K562 (cell line): ENCODE measurements at regions of chr4 and their contacts with region 1.

Region 1: GRCh38 chr4:48681856-48682255 is 98.2 kb downstream of the FRYL start:
- DNase-seq: peak in 1 of 4 experiments; percentile 59
- ATAC-seq: peak; percentile 58
- H3K4me3 ChIP-seq: no peak overlapping the region
- H3K27ac ChIP-seq: peak overlapping the region; percentile 70; the same call in 2 of the 3 replicates
- H3K4me1 ChIP-seq: peaks cover 2 to 29% of the 10 kb centered on the region in 2 experiments; a peak in 4 of 5 replicates
- H3K27me3 ChIP-seq: no peaks in the 10 kb centered on the region
- CTCF ChIP-seq: peak; percentile 17 to 64 (median 20); a peak in 3 of 6 replicates
- EP300 ChIP-seq: no peak
- POLR2A ChIP-seq: no peak
- RAD21 ChIP-seq: peak; percentile 43 to 74; a peak in 3 of 4 replicates

Region 2: DNA sequence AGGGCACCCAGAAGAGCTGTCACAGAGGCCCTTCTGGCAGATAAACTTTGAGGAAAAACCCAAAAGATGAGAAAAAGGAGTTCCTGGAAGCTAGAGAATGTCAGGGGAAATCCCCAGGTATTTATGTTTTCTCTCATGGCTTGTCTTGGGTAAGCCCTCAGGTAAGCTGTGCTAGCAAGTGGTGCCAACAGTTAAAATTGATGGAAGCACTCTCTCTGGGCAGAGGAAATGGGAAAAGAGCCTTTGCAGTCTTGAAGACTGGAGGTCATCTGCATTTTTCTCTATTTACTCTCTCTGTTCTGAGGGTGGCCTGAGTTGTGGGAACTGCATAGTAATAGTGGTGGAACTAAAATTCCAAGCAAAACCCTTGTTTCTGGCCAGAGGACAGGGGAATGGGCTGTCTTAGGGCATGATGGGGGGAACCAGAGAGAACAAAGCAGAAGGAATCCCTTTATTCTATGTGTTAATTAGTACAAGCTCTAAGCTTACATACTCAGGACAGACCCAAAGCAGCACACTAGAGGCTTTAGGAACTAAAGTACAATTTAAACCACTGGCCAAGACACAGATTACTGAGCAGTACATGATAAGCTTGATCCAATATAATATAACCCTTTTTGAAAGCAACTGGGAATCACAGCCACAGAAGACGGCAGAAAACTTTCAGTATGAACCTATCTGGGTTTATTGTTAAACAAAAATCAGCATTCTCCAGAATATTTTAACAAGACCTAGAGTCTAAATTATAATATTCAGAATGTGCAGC is 252.0 kb before region 1 on chr4:
- CTCF ChIA-PET with region 1: no interaction called
- POLR2A ChIA-PET with region 1: no interaction called
- in situ Hi-C with region 1: no loop called
- intact Hi-C with region 1: no loop called
- DNase-seq: no peak
- ATAC-seq: peak; percentile 20; the same call in 2 of the 3 replicates
- H3K4me3 ChIP-seq: no peak overlapping the region
- H3K27ac ChIP-seq: no peak overlapping the region
- H3K4me1 ChIP-seq: no peaks in the 10 kb centered on the region
- H3K27me3 ChIP-seq: no peaks in the 10 kb centered on the region
- CTCF ChIP-seq: no peak
- EP300 ChIP-seq: no peak
- POLR2A ChIP-seq: no peak
- RAD21 ChIP-seq: no peak

Region 3: GRCh38 chr4:48578132-48578968 is 103.5 kb before region 1 on chr4:
- CTCF ChIA-PET with region 1: interaction called, 6 read pairs
- POLR2A ChIA-PET with region 1: no interaction called
- in situ Hi-C with region 1: no loop called
- intact Hi-C with region 1: loop called (anchors 1 kb)
- DNase-seq: peak; percentile 45 to 77 (median 58)
- ATAC-seq: peak; percentile 94
- H3K4me3 ChIP-seq: no peak overlapping the region
- H3K27ac ChIP-seq: no peak overlapping the region
- H3K4me1 ChIP-seq: no peaks in the 10 kb centered on the region
- H3K27me3 ChIP-seq: no peaks in the 10 kb centered on the region
- CTCF ChIP-seq: peak; percentile 76 to 84 (median 80)
- EP300 ChIP-seq: no peak
- POLR2A ChIP-seq: no peak
- RAD21 ChIP-seq: peak; percentile 91 to 96

Region 4: DNA sequence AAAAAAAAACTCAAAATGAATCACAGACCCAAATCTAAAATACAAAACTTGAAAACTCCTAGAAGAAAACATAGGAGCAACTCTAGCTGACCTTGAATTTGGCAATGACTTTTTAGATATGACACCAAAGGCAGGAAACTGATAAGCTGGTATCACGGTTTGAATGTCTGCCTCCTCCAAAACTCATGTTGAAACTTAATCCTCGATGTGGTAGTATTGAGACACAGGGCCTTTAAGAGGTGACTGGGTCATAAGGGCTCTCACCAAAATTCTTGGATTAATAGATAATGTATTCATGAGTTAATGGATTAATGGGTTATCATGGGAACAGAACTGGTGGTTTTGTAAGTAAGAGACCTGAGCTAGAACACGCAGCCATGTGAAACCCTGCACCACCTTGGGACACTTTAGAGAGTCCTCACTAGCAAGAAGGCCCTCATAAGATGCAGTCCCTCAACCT is 57.7 kb after region 1 on chr4:
- CTCF ChIA-PET with region 1: no interaction called
- POLR2A ChIA-PET with region 1: no interaction called
- in situ Hi-C with region 1: no loop called
- intact Hi-C with region 1: loop called (anchors 10 kb)
- DNase-seq: peak in 2 of 4 experiments; percentile 30 to 72
- ATAC-seq: peak; percentile 78
- H3K4me3 ChIP-seq: no peak overlapping the region
- H3K27ac ChIP-seq: peak overlapping the region; percentile 60; the same call in 1 of the 3 replicates
- H3K4me1 ChIP-seq: peaks cover 9 to 27% of the 10 kb centered on the region in 2 experiments; a peak in 3 of 5 replicates
- H3K27me3 ChIP-seq: no peaks in the 10 kb centered on the region
- CTCF ChIP-seq: no peak
- EP300 ChIP-seq: peak; percentile 84; the same call in 1 of the 2 replicates
- POLR2A ChIP-seq: no peak
- RAD21 ChIP-seq: no peak

Region 5: DNA sequence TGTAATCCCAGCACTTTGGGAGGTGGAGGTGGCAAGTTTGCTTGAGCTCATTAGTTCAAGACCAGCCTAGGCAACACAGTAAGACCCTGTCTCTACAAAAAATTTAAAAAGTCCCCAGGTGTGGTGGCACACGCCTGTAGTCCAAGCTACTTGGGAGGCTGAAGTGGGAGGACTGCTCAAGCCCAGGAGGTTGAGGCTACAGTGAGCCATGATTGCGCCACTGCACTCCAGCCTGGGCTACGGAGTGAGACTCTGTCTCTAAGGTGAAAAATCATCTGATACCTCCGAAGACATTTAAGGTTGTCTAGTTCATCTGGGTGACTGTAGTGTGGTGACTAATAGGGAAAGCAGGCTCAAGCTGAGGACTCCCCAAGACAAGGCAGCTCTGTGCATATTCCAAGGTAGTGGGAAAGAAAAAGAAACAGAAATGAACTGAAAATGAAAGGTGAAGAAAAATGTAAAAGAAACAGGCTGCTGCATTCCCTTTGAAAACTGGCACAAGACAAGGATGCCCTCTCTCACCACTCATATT is 74.9 kb after region 1 on chr4:
- CTCF ChIA-PET with region 1: no interaction called
- POLR2A ChIA-PET with region 1: no interaction called
- in situ Hi-C with region 1: no loop called
- intact Hi-C with region 1: no loop called
- DNase-seq: no peak
- ATAC-seq: no peak
- H3K4me3 ChIP-seq: no peak overlapping the region
- H3K27ac ChIP-seq: no peak overlapping the region
- H3K4me1 ChIP-seq: peaks cover 0 to 7% of the 10 kb centered on the region in 2 experiments; a peak in 2 of 5 replicates
- H3K27me3 ChIP-seq: no peaks in the 10 kb centered on the region
- CTCF ChIP-seq: no peak
- EP300 ChIP-seq: no peak
- POLR2A ChIP-seq: no peak
- RAD21 ChIP-seq: no peak

Region 6: DNA sequence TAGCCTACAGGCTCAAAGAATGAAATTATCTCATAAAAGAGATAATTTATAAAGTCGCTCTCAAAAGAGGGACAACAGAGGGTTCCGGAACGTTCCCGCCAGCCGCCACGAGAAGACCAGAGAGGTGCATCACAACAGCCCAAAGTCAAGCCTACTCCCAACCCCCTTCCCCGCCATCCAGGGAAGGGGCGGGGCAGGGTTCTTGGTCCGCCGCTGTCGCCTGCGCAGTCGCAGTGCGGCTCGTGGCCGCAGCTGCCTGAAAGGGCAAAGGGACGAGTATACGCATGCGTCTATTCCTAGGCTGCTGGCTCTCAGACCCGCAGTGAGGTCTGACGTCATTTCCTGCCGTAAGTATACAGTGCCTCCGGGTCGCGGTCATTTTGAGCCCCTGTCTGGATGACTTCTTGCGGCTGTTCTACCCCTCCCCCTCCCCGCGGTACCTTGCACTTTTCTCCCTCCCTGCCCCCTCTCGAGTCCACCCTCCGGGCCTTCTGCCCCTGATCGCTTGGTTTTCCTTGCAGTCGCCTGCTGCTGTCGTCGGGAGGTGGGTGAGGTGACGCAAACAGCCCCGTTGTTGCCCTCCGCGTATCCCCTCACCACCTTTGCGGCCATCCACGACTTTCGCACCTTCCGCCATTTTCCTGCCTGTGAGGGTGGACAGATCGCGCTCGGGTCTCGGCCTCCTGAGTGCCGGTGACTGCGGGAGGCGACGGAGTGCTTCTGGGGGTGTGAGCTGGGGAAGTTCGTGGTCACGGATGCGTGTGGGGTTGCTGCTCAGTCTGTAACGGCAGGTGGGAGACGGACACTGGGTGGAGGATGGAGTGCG is 149.1 kb after region 1 on chr4 and contains the start of gene OCIAD1:
- CTCF ChIA-PET with region 1: no interaction called
- POLR2A ChIA-PET with region 1: no interaction called
- in situ Hi-C with region 1: no loop called
- intact Hi-C with region 1: loop called (anchors 2 kb)
- DNase-seq: peak; percentile 97 to 99 (median 98)
- ATAC-seq: peak; percentile 97
- H3K4me3 ChIP-seq: peak within 1 kb of the TSS; percentile 74
- H3K27ac ChIP-seq: peak within 1 kb of the TSS; percentile 94
- H3K4me1 ChIP-seq: peaks cover 6% of the 10 kb centered on the region in 2 experiments; a peak in 3 of 5 replicates
- H3K27me3 ChIP-seq: no peaks in the 10 kb centered on the region
- CTCF ChIP-seq: no peak
- EP300 ChIP-seq: peak; percentile 11; the same call in 1 of the 2 replicates
- POLR2A ChIP-seq: peak; percentile 95
- RAD21 ChIP-seq: no peak; a peak in 1 of 4 replicates
- polyA plus RNA-seq, gene OCIAD1: 204 to 222 TPM

Region 7: DNA sequence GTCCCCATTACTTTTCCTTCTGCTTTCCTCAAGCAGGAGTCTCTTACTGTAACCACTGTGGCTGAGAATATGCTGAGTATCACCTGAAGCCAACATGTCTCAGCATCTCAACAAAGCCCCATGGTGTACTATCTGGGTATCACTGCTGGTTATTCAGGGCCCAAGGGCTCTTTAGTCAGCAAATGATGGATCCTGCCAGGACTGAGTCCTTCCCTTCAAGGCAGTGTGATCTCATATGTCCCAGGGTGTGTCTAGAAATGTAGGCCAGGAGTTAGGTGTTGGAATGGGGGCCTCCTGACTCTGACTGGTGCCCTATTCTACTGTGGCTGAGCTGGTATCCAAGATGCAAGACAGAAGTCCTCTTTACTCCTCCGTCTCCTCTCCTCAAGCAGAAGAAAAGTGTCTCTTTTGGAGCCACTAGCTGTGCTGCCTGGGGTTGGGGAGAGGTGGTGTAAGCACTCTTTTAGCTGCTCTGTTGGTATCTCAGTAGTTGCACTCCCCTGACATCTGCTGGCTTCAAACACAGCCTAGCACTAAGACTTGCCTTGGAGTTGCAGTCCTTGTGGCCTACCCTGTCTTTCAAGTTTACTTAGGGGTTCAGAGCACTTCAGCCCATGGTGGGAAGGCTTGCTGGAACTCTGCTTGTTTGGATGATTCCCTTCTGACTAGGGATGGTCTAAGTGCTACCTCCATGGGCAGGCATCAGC is 196.1 kb after region 1 on chr4:
- CTCF ChIA-PET with region 1: no interaction called
- POLR2A ChIA-PET with region 1: no interaction called
- in situ Hi-C with region 1: no loop called
- intact Hi-C with region 1: no loop called
- DNase-seq: no peak
- ATAC-seq: peak; percentile 90
- H3K4me3 ChIP-seq: no peak overlapping the region
- H3K27ac ChIP-seq: no peak overlapping the region
- H3K4me1 ChIP-seq: no peaks in the 10 kb centered on the region
- H3K27me3 ChIP-seq: peaks cover 0 to 8% of the 10 kb centered on the region in 2 experiments; a peak in 1 of 5 replicates
- CTCF ChIP-seq: peak in 2 of 3 experiments; percentile 37 to 41; a peak in 4 of 6 replicates
- EP300 ChIP-seq: no peak
- POLR2A ChIP-seq: no peak
- RAD21 ChIP-seq: peak in 1 of 2 experiments; percentile 47; a peak in 2 of 4 replicates